Activated CD4-positive, alpha-beta memory T cell treated with anti-CD3 and anti-CD28 coated beads for 36 hours (primary cell): ENCODE measurements at regions of chr16 and their contacts with region 1.

Region 1: DNA sequence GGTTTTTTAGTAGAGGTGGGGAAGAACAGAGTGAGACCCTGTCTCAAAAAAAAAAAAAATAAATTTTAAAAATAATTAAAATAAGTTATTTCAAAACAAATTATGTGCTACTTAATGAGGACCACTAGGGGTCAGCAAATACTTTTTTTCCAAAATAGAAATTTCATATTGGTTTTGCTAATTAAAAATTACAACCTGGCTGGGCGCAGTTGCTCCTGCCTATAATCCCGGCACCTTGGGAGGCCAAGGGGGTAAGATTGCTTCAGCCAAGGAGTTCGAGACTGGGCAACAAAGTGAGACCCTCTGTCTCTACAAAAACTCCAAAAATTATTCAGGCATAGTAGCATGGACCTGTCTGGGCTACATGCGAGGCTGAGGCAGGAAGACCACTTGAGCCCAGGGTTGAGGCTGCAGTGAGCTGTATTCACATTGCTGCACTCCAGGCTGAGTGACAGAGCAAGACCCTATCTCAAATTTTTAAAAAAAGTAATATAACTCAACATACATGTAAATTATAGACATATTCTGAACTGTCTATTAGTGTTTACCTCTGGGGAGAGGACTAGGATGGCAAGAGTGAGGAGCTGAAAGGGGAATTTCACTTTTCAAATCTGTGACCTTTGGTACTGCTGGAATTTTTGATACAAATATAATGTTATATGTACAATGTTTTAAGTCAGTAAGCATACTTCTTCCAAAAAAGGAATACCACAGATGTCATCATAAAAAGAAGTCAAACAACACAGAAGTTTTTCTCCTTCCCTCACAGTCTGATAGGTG is 8.1 kb downstream of the MEIOB start:
- DNase-seq: no peak
- H3K4me3 Mint-ChIP-seq: no peak overlapping the region
- H3K27ac Mint-ChIP-seq: no peak overlapping the region
- H3K4me1 Mint-ChIP-seq: peaks cover 2% of the 10 kb centered on the region
- H3K27me3 Mint-ChIP-seq: peaks cover 10% of the 10 kb centered on the region

Region 2: GRCh38 chr16:1821861-1822611 is 41.8 kb before region 1 on chr16:
- CTCF ChIA-PET with region 1: no interaction called
- POLR2A ChIA-PET with region 1: no interaction called
- intact Hi-C with region 1: no loop called
- DNase-seq: no peak
- H3K4me3 Mint-ChIP-seq: no peak overlapping the region
- H3K27ac Mint-ChIP-seq: no peak overlapping the region
- H3K4me1 Mint-ChIP-seq: peaks cover 19% of the 10 kb centered on the region
- H3K27me3 Mint-ChIP-seq: no peaks in the 10 kb centered on the region

Region 3: GRCh38 chr16:1929578-1930337 is 65.9 kb after region 1 on chr16:
- CTCF ChIA-PET with region 1: interaction called, 23 read pairs
- POLR2A ChIA-PET with region 1: no interaction called
- intact Hi-C with region 1: loop called (anchors 2 kb)
- DNase-seq: peak; percentile 93
- H3K4me3 Mint-ChIP-seq: peak overlapping the region; percentile 60
- H3K27ac Mint-ChIP-seq: no peak overlapping the region
- H3K4me1 Mint-ChIP-seq: peaks cover 2% of the 10 kb centered on the region
- H3K27me3 Mint-ChIP-seq: no peaks in the 10 kb centered on the region